ENCODE measurements at regions of chr13 and their contacts with region 1.

Region 1: DNA sequence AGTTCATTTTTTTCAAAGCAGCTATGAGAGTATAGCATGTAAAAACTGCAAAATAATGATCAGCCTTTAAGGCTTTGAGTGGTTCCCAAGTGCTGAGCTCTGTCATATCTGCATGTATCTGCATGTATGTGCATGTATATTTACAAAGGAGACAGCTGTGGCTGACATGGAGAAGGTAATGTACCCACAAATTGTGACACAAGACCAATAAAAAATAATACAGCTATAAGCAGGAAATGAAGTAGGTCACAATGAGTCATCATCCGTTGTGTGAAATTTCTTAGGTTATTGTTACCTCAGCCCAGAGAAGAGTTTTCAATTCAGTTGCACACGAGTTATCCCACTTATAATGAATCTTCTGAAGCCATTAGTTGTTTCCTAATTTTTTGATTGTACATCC is 60.9 kb upstream of the MED4 start:
- DNase-seq: no peak
- H3K4me3 Mint-ChIP-seq: peak overlapping the region; percentile 64
- H3K27ac Mint-ChIP-seq: peak overlapping the region; percentile 95
- H3K4me1 Mint-ChIP-seq: peaks cover 84% of the 10 kb centered on the region
- H3K27me3 Mint-ChIP-seq: no peaks in the 10 kb centered on the region

Region 2: DNA sequence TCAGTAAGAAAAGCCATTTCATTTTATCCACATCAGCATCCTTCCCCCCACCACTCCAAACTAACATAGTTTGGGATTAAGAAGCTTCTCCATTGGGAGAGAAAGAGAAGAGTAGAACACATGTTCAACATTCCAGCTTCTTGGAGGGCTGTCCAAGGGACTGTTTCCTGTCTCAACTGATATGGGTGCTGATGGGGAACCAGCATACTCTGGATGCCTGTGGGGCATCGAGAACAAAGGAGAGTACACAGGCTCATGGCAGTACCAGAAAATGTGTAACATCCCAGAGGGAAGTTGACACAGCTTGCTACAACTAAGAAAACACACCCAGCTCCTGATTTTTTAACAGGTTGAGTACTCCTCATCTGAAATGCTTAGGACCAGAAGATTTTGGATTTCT is 179.5 kb before region 1 on chr13:
- CTCF ChIA-PET with region 1: no interaction called
- POLR2A ChIA-PET with region 1: no interaction called
- intact Hi-C with region 1: no loop called
- DNase-seq: no peak
- H3K4me3 Mint-ChIP-seq: no peak overlapping the region
- H3K27ac Mint-ChIP-seq: no peak overlapping the region
- H3K4me1 Mint-ChIP-seq: no peaks in the 10 kb centered on the region
- H3K27me3 Mint-ChIP-seq: no peaks in the 10 kb centered on the region

Region 3: GRCh38 chr13:48126944-48127830 is 28.7 kb before region 1 on chr13:
- CTCF ChIA-PET with region 1: interaction called, 3 read pairs
- POLR2A ChIA-PET with region 1: no interaction called
- intact Hi-C with region 1: loop called (anchors 2 kb)
- DNase-seq: peak; percentile 26
- H3K4me3 Mint-ChIP-seq: peak overlapping the region; percentile 10
- H3K27ac Mint-ChIP-seq: no peak overlapping the region
- H3K4me1 Mint-ChIP-seq: peaks cover 22% of the 10 kb centered on the region
- H3K27me3 Mint-ChIP-seq: peaks cover 3% of the 10 kb centered on the region

Region 4: DNA sequence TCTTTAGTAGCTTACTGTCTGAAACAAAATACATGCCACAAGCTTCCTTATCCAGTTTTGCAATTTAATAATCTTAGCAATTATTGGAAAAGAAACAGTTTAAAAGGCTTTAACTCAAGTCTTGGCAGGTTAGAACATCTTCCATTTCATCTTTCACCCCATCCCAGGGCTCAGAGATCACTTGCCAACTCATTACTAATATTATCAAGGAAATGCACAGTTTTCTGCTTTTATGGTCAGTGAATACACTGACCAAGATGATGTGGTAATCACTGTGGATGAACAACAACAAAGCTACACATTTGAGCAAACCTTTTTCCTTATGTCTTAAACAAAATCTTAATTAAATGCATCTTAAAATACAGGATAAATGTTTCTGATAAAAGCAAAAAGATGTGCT is 29.2 kb after region 1 on chr13:
- CTCF ChIA-PET with region 1: interaction called, 4 read pairs
- POLR2A ChIA-PET with region 1: no interaction called
- intact Hi-C with region 1: loop called (anchors 2 kb)
- DNase-seq: no peak
- H3K4me3 Mint-ChIP-seq: no peak overlapping the region
- H3K27ac Mint-ChIP-seq: no peak overlapping the region
- H3K4me1 Mint-ChIP-seq: peaks cover 51% of the 10 kb centered on the region
- H3K27me3 Mint-ChIP-seq: no peaks in the 10 kb centered on the region

Region 5: GRCh38 chr13:48222358-48223301 is 66.8 kb after region 1 on chr13:
- CTCF ChIA-PET with region 1: no interaction called
- POLR2A ChIA-PET with region 1: no interaction called
- intact Hi-C with region 1: loop called (anchors 2 kb)
- DNase-seq: peak; percentile 30
- H3K4me3 Mint-ChIP-seq: peak overlapping the region; percentile 35
- H3K27ac Mint-ChIP-seq: no peak overlapping the region
- H3K4me1 Mint-ChIP-seq: peaks cover 51% of the 10 kb centered on the region
- H3K27me3 Mint-ChIP-seq: no peaks in the 10 kb centered on the region

Region 6: DNA sequence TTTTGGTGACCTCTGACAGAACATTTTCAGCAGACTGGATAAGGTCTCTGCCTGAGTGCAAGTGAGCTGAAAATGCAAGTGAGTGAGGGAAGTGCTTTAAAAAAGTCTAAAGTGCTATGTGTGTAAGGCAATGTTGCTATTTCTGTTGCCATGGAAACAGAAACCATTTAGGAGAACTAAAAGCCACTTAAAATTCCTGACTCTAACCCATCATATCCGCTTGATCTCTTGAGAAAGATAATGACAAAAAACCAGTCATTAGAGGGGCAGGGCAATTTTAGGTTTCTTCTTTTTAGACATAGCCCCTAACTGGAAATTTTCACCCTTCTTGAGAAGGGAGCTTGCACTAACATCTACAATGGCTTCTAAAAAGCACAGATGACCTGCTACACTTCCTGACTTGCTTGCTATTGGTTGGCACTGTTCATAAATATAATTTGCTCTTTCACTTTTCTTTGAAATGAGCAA is 497.7 kb after region 1 on chr13 and contains the start of gene CYSLTR2:
- CTCF ChIA-PET with region 1: interaction called, 3 read pairs
- POLR2A ChIA-PET with region 1: no interaction called
- intact Hi-C with region 1: loop called (anchors 10 kb)
- DNase-seq: peak; percentile 16
- H3K4me3 Mint-ChIP-seq: peak within 1 kb of the TSS; percentile 75
- H3K27ac Mint-ChIP-seq: peak within 1 kb of the TSS; percentile 81
- H3K4me1 Mint-ChIP-seq: peaks cover 33% of the 10 kb centered on the region
- H3K27me3 Mint-ChIP-seq: no peaks in the 10 kb centered on the region
- total RNA-seq, gene CYSLTR2: 2.1 to 2.4 TPM

Measured in activated CD4-positive, alpha-beta memory T cell treated with anti-CD3 and anti-CD28 coated beads for 36 hours (primary cell).